HepG2 (cell line): ENCODE measurements at regions of chr5 and their contacts with region 1.

Region 1: GRCh38 chr5:65481635-65482295 is at the start of gene ADAMTS6:
- DNase-seq: peak; percentile 70
- ATAC-seq: peak; percentile 86
- H3K4me3 ChIP-seq: peak within 1 kb of the TSS; percentile 61 to 73 (median 67)
- H3K27ac ChIP-seq: peak within 1 kb of the TSS; percentile 56
- H3K4me1 ChIP-seq: peaks cover 17% of the 10 kb centered on the region
- H3K27me3 ChIP-seq: no peaks in the 10 kb centered on the region; a peak in 1 of 5 replicates
- CTCF ChIP-seq: no peak
- EP300 ChIP-seq: no peak
- POLR2A ChIP-seq: peak in 1 of 2 experiments; percentile 24; a peak in 1 of 4 replicates
- RAD21 ChIP-seq: no peak
- total RNA-seq, gene ADAMTS6: 0.93 and 3.1 TPM in 2 replicates

Region 2: GRCh38 chr5:64634997-64635686 is 846.6 kb before region 1 on chr5:
- CTCF ChIA-PET with region 1: no interaction called
- POLR2A ChIA-PET with region 1: no interaction called
- in situ Hi-C with region 1: loop called (anchors 25 kb)
- intact Hi-C with region 1: loop called (anchors 5 kb)
- DNase-seq: no peak
- ATAC-seq: no peak
- H3K4me3 ChIP-seq: no peak overlapping the region
- H3K27ac ChIP-seq: no peak overlapping the region
- H3K4me1 ChIP-seq: no peaks in the 10 kb centered on the region; the same call in 1 of the 2 replicates
- H3K27me3 ChIP-seq: no peaks in the 10 kb centered on the region; a peak in 1 of 5 replicates
- CTCF ChIP-seq: peak; percentile 68
- EP300 ChIP-seq: no peak
- POLR2A ChIP-seq: no peak
- RAD21 ChIP-seq: no peak

Region 3: DNA sequence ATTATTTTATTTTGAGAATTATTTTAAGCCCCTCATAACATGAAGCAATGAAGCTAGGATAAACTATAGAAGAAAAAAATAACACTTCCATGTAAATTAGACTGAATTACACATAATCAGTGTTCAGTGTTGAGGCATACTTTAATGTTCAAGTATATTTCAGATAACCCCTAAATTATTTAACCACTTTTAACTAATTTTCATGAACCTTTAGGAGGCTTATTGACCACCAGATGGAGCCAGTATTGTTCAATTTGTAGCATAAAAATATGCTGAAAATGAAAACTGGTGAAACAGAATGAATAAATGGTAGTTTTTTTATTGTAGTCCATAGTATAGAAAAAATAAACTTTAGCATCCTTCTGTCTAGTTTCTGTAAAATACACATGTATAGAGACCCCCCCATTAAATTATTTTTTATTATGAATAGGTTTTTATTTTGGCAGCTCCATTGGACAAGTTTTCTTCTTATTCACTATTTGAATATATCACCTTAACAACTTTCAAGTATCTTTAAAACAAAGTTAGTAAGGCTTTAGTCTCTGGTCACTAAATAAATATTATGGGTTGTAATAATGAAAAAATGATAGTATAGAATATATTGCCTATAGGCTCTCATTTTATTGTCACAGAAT is 522.9 kb before region 1 on chr5:
- CTCF ChIA-PET with region 1: interaction called, 4 read pairs
- POLR2A ChIA-PET with region 1: no interaction called
- in situ Hi-C with region 1: loop called (anchors 25 kb)
- intact Hi-C with region 1: loop called (anchors 1 kb)
- DNase-seq: peak; percentile 11
- ATAC-seq: no peak
- H3K4me3 ChIP-seq: no peak overlapping the region
- H3K27ac ChIP-seq: no peak overlapping the region
- H3K4me1 ChIP-seq: no peaks in the 10 kb centered on the region
- H3K27me3 ChIP-seq: no peaks in the 10 kb centered on the region
- CTCF ChIP-seq: peak; percentile 20
- EP300 ChIP-seq: no peak
- POLR2A ChIP-seq: no peak
- RAD21 ChIP-seq: no peak

Region 4: GRCh38 chr5:65076251-65076869 is 405.4 kb before region 1 on chr5:
- CTCF ChIA-PET with region 1: interaction called, 5 read pairs
- POLR2A ChIA-PET with region 1: no interaction called
- in situ Hi-C with region 1: no loop called
- intact Hi-C with region 1: loop called (anchors 1 kb)
- DNase-seq: peak; percentile 45
- ATAC-seq: peak; percentile 82
- H3K4me3 ChIP-seq: no peak overlapping the region
- H3K27ac ChIP-seq: no peak overlapping the region
- H3K4me1 ChIP-seq: no peaks in the 10 kb centered on the region
- H3K27me3 ChIP-seq: peaks cover 0 to 18% of the 10 kb centered on the region in 2 experiments; a peak in 2 of 5 replicates
- CTCF ChIP-seq: peak; percentile 26; the same call in 1 of the 2 replicates
- EP300 ChIP-seq: no peak
- POLR2A ChIP-seq: no peak
- RAD21 ChIP-seq: no peak

Region 5: GRCh38 chr5:65213921-65214525 is 267.7 kb before region 1 on chr5:
- CTCF ChIA-PET with region 1: no interaction called
- POLR2A ChIA-PET with region 1: no interaction called
- in situ Hi-C with region 1: loop called (anchors 5 kb)
- intact Hi-C with region 1: loop called (anchors 1 kb)
- DNase-seq: peak; percentile 41
- ATAC-seq: peak; percentile 94
- H3K4me3 ChIP-seq: no peak overlapping the region
- H3K27ac ChIP-seq: no peak overlapping the region
- H3K4me1 ChIP-seq: no peaks in the 10 kb centered on the region
- H3K27me3 ChIP-seq: no peaks in the 10 kb centered on the region
- CTCF ChIP-seq: peak; percentile 62
- EP300 ChIP-seq: no peak
- POLR2A ChIP-seq: no peak
- RAD21 ChIP-seq: no peak